ENCODE measurements at regions of chr22 and their contacts with region 1.

Region 1: GRCh38 chr22:41697126-41697775 is 2.1 kb upstream of the MEI1 start:
- DNase-seq: peak; percentile 90
- H3K4me3 ChIP-seq: no peak overlapping the region
- H3K27ac ChIP-seq: no peak overlapping the region
- H3K4me1 ChIP-seq: peaks cover 13% of the 10 kb centered on the region
- CTCF ChIP-seq: peak; percentile 100

Region 2: DNA sequence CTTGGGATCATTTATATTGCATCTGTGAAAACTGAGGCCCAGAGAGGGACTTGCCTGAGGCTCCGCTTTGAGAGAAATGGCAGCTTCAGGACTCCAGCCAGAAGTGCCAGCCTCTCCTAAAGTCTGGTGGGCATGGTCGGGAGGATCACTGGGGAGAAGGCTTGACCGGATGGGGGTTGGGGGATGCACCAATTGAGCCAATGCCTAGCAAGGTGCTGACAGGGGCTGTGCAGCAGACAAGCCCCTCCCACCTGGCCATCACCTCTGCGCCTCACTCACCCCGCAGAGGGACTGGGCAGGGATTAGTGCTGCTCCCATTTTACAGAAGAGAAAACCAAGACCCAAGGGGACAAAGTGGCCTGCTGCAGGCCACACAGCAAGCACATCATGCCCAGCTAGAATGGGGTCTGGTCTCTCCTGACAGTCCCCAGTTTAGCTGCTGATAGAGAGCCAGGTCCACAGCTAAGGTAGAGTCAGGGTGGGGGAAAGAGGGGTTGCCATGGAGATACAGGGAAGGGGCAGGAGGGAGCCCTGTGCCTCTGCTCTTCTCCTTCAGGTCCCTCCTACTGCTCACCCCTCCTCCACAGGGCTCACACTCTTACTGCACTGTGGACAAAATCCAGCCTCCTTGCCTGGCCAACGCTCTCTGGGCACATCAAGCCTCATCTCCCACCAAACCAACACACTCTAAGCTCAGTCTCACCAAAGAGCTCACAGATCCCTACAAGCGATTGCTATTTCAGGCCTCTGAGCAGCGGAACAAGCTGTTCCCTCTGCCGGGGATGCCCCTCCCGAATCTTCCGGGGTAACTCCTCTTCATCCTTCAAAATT is 286.0 kb before region 1 on chr22:
- CTCF ChIA-PET with region 1: no interaction called
- POLR2A ChIA-PET with region 1: interaction called, 12 read pairs
- intact Hi-C with region 1: no loop called
- DNase-seq: no peak
- H3K4me3 ChIP-seq: no peak overlapping the region
- H3K27ac ChIP-seq: peak overlapping the region; percentile 85
- H3K4me1 ChIP-seq: peaks cover 38% of the 10 kb centered on the region
- CTCF ChIP-seq: no peak

Region 3: DNA sequence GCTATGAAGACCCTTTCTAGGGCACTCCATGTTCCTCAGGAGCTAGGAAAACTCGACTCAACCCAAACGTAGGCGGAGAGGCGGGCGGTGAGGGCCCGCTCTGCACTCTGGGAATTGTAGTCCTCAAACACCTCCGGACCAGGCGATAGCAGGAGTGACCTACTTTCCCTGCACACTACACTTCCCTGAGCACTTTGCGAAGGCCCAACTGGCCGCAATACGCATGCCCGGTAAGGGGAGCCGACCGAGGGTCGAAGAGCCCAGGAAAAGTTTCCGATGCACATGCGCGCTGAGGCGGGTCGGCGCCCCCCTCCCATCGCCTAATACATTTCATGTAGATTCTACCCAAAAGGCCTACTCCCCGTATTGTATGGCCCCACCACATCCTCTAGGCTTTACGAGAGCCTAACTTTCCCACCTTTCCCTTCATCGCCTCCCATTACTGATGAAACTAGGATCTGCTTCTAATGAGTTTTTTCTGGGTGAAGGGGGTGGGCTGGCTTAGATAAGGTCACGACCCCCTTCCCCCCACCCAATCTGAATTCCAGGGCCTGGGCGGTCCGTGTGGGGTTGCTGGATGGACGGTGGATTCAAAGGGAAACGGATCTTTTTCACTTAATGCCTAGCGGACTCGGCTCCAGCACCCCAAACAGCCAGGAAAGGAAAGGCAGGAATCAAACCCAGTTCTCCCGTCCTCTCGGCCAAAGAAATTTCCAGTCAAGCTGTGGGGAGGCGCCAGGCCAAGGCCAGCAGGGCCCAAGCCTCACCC is 252.7 kb before region 1 on chr22:
- CTCF ChIA-PET with region 1: no interaction called
- POLR2A ChIA-PET with region 1: no interaction called
- intact Hi-C with region 1: no loop called
- DNase-seq: peak; percentile 97
- H3K4me3 ChIP-seq: peak overlapping the region; percentile 83
- H3K27ac ChIP-seq: peak overlapping the region; percentile 85
- H3K4me1 ChIP-seq: peaks cover 14% of the 10 kb centered on the region
- CTCF ChIP-seq: no peak

Region 4: DNA sequence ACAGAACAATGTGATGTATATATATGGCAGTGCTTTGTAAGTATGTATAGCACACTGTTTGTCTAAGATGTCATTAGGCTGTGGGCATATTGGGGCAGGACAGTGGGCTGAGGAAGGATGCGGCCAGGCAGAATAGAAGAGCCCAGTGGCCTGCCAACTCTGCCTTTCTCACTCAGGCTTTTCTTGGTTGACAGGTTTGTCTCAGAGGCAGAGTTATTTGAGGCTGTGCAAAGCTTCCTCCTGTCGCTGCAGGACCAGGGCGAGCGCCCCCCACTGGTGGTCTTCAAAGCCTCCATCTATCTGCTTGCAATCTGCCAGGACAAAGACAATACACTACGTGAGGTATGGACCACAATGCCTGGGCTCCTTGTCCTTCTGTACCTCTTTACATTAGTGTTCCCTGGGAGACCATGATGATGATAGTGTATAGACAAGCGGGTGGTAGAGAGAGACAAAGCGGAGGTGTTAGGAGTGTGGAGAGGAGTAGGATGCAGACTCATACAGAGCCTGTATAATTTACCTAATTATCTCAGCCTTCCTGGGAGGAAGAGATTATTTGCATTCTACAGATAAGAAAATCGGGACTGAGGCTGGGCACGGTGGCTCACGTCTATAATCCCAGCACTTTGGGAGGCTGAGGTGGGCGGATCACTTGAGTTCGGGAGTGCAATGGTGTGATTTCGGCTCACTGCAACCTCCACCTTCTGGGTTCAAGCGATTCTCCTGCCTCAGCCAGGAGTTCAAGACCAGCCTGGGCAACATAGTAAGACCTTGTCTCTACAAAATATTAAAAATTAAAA is 65.9 kb after region 1 on chr22:
- CTCF ChIA-PET with region 1: interaction called, 6 read pairs
- POLR2A ChIA-PET with region 1: no interaction called
- intact Hi-C with region 1: loop called (anchors 1 kb)
- DNase-seq: peak; percentile 72
- H3K4me3 ChIP-seq: no peak overlapping the region
- H3K27ac ChIP-seq: no peak overlapping the region
- H3K4me1 ChIP-seq: no peaks in the 10 kb centered on the region
- CTCF ChIP-seq: peak; percentile 89

Region 5: GRCh38 chr22:41822317-41823060 is 125.2 kb after region 1 on chr22:
- CTCF ChIA-PET with region 1: no interaction called
- POLR2A ChIA-PET with region 1: no interaction called
- intact Hi-C with region 1: loop called (anchors 5 kb)
- DNase-seq: peak; percentile 84
- H3K4me3 ChIP-seq: no peak overlapping the region
- H3K27ac ChIP-seq: no peak overlapping the region
- H3K4me1 ChIP-seq: no peaks in the 10 kb centered on the region
- CTCF ChIP-seq: peak; percentile 87

Region 6: GRCh38 chr22:41940832-41941765 is 243.8 kb after region 1 on chr22:
- CTCF ChIA-PET with region 1: no interaction called
- POLR2A ChIA-PET with region 1: no interaction called
- intact Hi-C with region 1: loop called (anchors 2 kb)
- DNase-seq: peak; percentile 85
- H3K4me3 ChIP-seq: peak overlapping the region; percentile 52
- H3K27ac ChIP-seq: peak overlapping the region; percentile 91
- H3K4me1 ChIP-seq: peaks cover 83% of the 10 kb centered on the region
- CTCF ChIP-seq: peak; percentile 92

Measured in OCI-LY7 (cell line).